Caco-2 (cell line): ENCODE measurements at regions of chrX and their contacts with region 1.

Region 1: DNA sequence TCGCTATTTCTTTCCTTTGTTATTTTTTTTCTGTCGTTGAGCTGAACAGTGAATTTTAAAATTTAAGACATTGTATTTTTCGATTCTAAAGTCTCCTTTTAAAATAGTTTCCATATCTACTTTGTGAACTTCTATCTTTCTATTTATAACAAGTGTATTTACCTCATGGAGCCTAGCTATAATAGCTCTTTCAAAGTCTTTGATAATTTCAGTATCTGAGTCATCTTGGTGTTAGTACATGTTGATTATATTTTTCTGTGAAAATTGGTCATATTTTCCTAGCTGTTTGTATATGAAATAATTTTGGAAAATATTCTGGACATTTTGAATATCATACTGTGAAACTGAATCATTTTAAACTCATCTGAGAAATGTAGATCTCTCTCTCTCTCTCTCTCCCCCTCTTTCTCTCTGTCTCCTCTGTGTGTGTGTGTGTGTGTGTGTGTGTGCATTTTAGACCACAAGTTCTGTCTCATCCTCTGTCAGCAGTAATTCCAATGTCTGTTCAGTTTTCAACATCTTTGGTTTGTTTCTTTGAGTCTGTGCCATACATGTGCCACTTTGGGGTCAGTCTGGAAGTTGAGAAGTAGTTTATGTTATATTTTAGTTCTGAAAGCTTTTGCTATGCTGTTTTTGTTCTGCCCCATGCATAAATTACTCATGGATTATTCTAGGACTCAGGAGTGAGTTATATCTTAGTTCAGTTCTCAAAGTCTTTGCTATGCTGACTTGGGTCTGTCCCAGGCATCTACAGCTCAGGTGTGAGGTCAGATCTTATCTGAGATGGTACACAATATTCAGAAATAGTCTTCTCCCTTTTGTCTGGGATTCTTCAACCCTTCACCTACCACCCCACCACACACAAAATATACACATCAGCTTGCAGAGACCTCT is 366.4 kb upstream of the CASK start:
- DNase-seq: no peak
- H3K4me3 ChIP-seq: no peak overlapping the region
- H3K4me3 Mint-ChIP-seq: no peak overlapping the region
- H3K27ac Mint-ChIP-seq: no peak overlapping the region
- H3K4me1 ChIP-seq: no peaks in the 10 kb centered on the region
- H3K4me1 Mint-ChIP-seq: no peaks in the 10 kb centered on the region
- H3K27me3 ChIP-seq: no peaks in the 10 kb centered on the region
- H3K27me3 Mint-ChIP-seq: no peaks in the 10 kb centered on the region
- CTCF ChIP-seq: no peak

Region 2: DNA sequence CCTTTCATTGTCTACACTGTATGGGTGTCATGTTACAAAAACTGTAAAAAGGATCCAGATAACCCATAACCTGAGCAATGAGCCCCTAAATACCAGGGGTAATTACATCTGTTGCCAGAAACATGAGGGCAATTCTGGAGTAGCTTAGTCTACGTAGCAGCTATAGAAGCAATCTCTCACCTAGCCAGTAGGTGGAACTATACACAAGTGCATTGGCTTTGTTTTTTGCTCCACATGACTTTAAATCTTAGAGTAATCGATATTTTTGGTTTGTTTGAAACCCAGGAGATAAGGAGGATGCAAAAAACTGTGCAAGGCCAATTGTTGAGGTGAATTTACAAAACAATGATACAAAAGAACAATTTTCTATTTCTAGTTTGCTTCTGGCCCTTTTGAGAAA is 508.2 kb before region 1 on chrX:
- CTCF ChIA-PET with region 1: no interaction called
- POLR2A ChIA-PET with region 1: no interaction called
- intact Hi-C with region 1: loop called (anchors 10 kb)
- DNase-seq: peak in 1 of 2 experiments; percentile 30
- H3K4me3 ChIP-seq: no peak overlapping the region
- H3K4me3 Mint-ChIP-seq: no peak overlapping the region
- H3K27ac Mint-ChIP-seq: no peak overlapping the region
- H3K4me1 ChIP-seq: 0 out of 2 replicates have a peak, but pooled peaks cover 9% of the 10 kb centered on the region
- H3K4me1 Mint-ChIP-seq: no peaks in the 10 kb centered on the region
- H3K27me3 ChIP-seq: no peaks in the 10 kb centered on the region
- H3K27me3 Mint-ChIP-seq: no peaks in the 10 kb centered on the region
- CTCF ChIP-seq: peak; percentile 47 to 65

Region 3: GRCh38 chrX:42093756-42094155 is 196.0 kb before region 1 on chrX:
- CTCF ChIA-PET with region 1: no interaction called
- POLR2A ChIA-PET with region 1: no interaction called
- intact Hi-C with region 1: no loop called
- DNase-seq: no peak
- H3K4me3 ChIP-seq: no peak overlapping the region
- H3K4me3 Mint-ChIP-seq: peak overlapping the region; percentile 62
- H3K27ac Mint-ChIP-seq: peak overlapping the region; percentile 92
- H3K4me1 ChIP-seq: peaks cover 48% of the 10 kb centered on the region
- H3K4me1 Mint-ChIP-seq: peaks cover 31% of the 10 kb centered on the region
- H3K27me3 ChIP-seq: no peaks in the 10 kb centered on the region
- H3K27me3 Mint-ChIP-seq: no peaks in the 10 kb centered on the region
- CTCF ChIP-seq: no peak